Breast epithelium (tissue), 4 donors: ENCODE measurements at regions of chr22 and their contacts with region 1.

Region 1: DNA sequence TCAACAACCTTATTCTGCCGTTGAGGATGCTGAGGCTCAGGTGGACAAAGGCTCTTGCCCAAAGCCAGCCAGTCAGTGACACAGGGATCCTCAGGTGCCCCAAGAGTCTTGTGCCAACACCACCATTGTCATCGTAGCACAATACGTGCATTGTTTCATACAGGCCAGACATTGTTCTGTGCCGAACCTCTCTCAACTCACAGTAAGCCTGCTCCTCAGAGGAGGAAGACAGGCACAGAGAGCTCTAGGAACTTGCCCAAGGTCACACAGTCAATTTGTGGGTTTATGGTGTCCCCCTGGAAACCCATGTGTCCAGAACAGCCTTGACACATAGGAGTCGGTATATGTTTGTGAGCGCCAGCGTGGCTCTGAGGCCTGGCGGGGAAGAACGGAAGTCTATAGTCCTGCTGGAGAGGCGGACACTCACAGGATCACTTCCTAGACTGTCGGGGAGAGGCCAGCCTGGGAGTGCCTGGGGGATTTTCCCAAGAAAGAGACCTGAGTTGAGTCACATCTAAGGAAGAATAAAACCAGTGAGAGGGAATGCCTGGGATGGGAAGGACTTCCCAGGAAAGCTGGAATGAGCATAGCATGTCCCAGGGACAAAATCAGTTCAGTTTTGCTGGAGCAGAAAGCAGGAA is 20.2 kb downstream of the LIF start:
- DNase-seq: peak in 1 of 2 donors; percentile 62
- H3K4me3 ChIP-seq: no peak overlapping the region
- H3K27ac ChIP-seq: peak overlapping the region; percentile 30 to 49
- H3K4me1 ChIP-seq: no peaks in the 10 kb centered on the region
- H3K27me3 ChIP-seq: no peaks in the 10 kb centered on the region
- CTCF ChIP-seq: no peak
- POLR2A ChIP-seq: no peak

Region 2: GRCh38 chr22:29011240-29012100 is 1214.8 kb before region 1 on chr22:
- intact Hi-C with region 1: no loop called
- DNase-seq: no peak
- H3K4me3 ChIP-seq: no peak overlapping the region
- H3K27ac ChIP-seq: no peak overlapping the region
- H3K4me1 ChIP-seq: no peaks in the 10 kb centered on the region
- H3K27me3 ChIP-seq: no peaks in the 10 kb centered on the region
- CTCF ChIP-seq: no peak
- POLR2A ChIP-seq: no peak

Region 3: GRCh38 chr22:30178181-30179126 is 47.9 kb before region 1 on chr22:
- intact Hi-C with region 1: loop called (anchors 2 kb)
- DNase-seq: no peak
- H3K4me3 ChIP-seq: no peak overlapping the region
- H3K27ac ChIP-seq: no peak overlapping the region
- H3K4me1 ChIP-seq: no peaks in the 10 kb centered on the region
- H3K27me3 ChIP-seq: no peaks in the 10 kb centered on the region
- CTCF ChIP-seq: peak in 1 of 3 donors; percentile 19
- POLR2A ChIP-seq: no peak

Region 4: DNA sequence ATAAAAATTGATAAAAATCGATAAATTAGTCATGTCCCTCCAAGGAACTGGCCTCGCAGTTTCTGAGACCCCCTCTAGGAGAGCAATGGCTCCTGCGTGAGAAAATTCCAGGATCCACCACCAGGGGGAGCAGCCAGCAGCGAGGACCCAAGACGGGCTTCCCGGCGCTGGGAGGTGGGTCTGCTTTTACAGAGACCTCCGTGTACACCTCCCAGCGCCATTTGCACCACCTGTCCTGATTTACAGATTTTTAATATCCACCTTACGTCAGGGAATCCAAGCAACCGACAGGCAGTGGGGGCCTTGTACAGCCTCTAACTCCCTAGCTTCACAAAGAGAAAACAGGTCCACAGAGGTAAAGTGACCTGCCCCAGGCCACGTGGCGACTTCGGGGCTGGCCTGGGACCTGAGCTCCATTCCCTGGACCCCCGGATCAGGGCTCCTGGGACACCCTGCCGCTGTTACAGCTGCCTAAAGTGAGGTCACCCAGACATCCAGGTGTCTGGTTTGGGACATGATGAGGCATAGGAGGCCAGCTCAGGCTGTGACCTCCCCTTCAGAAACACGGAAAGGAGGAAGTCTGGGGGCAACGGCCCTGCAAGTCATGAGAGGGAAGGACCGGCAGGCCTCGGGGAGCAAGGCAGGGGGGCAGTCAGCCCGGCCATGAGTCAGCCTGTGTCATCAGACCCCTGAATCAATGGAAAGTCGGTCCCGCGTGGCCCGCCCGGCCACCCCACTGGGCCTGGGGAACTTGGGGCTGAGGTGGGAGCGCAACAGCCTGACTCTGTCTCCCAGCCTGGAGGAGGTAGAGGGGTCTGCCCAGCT is 36.8 kb after region 1 on chr22:
- intact Hi-C with region 1: no loop called
- DNase-seq: peak; percentile 51 to 79
- H3K4me3 ChIP-seq: peak overlapping the region; percentile 18 to 51 (median 26)
- H3K27ac ChIP-seq: no peak overlapping the region
- H3K4me1 ChIP-seq: no peaks in the 10 kb centered on the region
- H3K27me3 ChIP-seq: no peaks in the 10 kb centered on the region
- CTCF ChIP-seq: peak; percentile 99 to 100 (median 99)
- POLR2A ChIP-seq: no peak

Region 5: DNA sequence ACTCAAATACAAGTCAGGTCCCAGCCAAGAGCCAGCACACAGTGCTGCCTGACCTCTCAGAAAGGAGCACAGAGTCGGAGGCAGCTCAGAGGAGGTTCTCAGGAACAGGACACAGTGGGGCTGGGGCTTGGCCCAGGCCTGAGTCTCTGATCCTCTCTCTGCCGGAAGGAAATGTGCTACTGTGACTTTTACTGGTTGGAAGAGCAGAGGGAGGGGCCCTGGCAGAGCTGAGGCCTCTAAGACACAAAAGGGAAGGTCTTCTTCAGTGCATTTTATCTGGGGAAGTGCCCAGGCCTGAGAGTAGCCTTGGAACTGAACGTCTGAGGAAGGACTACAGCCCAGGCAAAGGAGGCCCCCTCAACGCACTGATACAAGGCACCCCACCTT is 79.2 kb after region 1 on chr22:
- intact Hi-C with region 1: no loop called
- DNase-seq: peak in 1 of 2 donors; percentile 41
- H3K4me3 ChIP-seq: peak overlapping the region in 1 of 3 donors; percentile 23
- H3K27ac ChIP-seq: peak overlapping the region; percentile 88 to 96
- H3K4me1 ChIP-seq: peaks cover 36 to 88% of the 10 kb centered on the region in 2 donors
- H3K27me3 ChIP-seq: no peaks in the 10 kb centered on the region
- CTCF ChIP-seq: no peak
- POLR2A ChIP-seq: peak; percentile 19

Region 6: GRCh38 chr22:31439808-31440207 is 1213.5 kb after region 1 on chr22:
- intact Hi-C with region 1: no loop called
- DNase-seq: no peak
- H3K4me3 ChIP-seq: no peak overlapping the region
- H3K27ac ChIP-seq: no peak overlapping the region
- H3K4me1 ChIP-seq: no peaks in the 10 kb centered on the region
- H3K27me3 ChIP-seq: no peaks in the 10 kb centered on the region
- CTCF ChIP-seq: no peak
- POLR2A ChIP-seq: no peak